ENCODE measurements at regions of chr7 and their contacts with region 1.

Region 1: DNA sequence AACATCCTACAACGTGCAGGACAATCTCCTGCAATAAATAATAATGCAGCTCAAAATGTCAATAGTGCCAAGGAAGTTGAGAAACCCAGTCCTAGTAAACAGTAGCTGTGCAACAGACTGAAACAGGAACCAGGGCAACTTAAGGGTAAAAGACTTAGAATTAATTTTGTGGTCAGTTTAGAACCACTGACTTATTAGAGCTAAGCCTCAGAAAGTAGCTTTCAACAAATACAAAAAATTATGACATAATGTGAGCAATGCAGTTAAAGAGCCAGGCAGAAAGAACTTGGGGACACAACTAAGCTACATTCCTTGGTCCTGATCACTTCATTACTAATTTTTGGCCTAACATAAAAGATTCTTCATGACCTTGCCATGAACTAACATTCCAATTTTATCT is 195.4 kb downstream of the MACC1 start:
- DNase-seq: no peak
- ATAC-seq: no peak
- H3K4me3 ChIP-seq: no peak overlapping the region
- H3K27ac ChIP-seq: no peak overlapping the region
- H3K4me1 ChIP-seq: no peaks in the 10 kb centered on the region
- H3K27me3 ChIP-seq: no peaks in the 10 kb centered on the region
- CTCF ChIP-seq: no peak
- POLR2A ChIP-seq: no peak

Region 2: DNA sequence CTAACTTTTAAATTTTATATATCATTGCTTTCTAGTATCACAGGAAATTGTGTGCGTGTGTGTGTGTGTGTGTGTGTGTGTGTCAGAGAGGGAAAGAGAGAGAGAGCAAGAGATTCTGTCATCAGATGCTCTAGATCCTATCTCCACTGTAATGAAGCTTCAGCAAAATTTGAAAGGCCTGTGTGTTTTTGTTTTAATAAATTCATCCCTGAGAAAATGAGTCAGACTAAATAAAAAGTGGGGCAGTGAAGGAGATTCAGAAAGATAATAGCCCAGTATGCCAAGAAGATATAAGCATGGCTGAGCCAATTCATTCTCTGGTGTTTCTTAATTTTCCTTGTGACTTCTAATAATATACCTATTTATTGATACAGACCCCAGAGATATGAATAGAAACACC is 64.2 kb before region 1 on chr7:
- in situ Hi-C with region 1: no loop called
- intact Hi-C with region 1: no loop called
- DNase-seq: no peak
- ATAC-seq: no peak
- H3K4me3 ChIP-seq: no peak overlapping the region
- H3K27ac ChIP-seq: no peak overlapping the region
- H3K4me1 ChIP-seq: no peaks in the 10 kb centered on the region
- H3K27me3 ChIP-seq: no peaks in the 10 kb centered on the region
- CTCF ChIP-seq: no peak
- POLR2A ChIP-seq: no peak

Region 3: DNA sequence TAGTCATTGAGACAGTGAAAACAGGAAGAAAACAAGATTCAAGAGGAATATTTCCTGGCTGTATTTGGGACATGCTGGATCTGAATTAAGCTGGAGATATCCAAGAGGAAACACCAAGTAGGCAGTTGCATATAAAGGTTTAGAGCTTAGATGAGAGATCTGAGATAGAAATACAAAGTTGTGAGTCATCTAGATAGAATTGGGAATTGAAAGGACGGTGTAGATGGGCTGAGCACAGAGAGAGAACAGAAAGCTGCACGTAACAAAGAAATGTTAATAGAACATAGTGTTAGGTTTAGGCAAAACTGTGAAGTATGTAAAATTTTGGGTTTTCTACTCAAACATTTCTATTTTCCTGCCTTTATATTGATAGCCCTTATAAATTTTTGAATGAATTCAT is 29.9 kb before region 1 on chr7:
- in situ Hi-C with region 1: no loop called
- intact Hi-C with region 1: loop called (anchors 1 kb)
- DNase-seq: no peak
- ATAC-seq: no peak
- H3K4me3 ChIP-seq: no peak overlapping the region
- H3K27ac ChIP-seq: no peak overlapping the region
- H3K4me1 ChIP-seq: no peaks in the 10 kb centered on the region
- H3K27me3 ChIP-seq: no peaks in the 10 kb centered on the region
- CTCF ChIP-seq: no peak
- POLR2A ChIP-seq: no peak